SK-N-SH (cell line): ENCODE measurements at regions of chr14 and their contacts with region 1.

Region 1: DNA sequence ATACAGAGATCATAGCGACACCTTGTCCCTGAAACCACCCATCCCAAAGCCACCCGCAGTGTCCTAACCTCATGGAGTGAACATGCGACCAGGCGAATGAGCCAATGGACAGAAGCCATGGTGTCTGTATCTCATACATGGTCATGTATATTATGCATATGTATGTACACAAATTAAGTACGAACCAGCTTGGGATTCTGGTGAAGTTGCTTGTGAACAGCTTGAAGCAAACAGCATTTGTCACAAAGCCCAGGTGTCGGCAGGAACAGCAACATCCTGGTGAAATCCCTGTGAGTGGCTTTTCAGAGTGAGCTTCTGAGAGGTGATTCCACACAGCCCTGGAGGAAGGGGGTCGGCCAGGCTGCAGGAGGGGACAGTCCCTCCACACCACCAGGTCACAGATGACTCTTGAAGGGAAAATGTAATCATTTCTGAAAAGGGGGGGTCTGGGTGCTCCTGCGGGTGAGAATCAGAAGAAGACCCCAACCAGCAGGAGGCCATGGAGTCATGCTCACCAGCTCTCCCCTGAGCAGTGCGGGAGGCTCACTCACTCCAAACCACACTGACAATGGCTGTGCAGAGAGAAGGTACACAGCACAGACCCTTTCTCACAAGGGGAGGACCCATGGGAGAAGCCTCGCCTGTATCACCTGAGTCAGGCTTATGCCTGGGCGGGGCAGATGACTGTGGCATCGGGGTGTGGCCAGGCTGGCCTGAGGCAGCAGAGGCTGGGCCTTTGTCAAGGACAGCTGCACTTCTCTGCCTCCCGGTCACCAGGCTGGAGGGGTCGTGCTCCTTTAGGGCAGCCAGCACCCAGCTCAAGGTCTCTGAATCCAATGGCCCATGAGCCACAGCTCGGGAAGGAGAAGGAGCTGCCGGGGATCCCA is 14.3 kb downstream of the CHGA start:
- DNase-seq: no peak
- H3K4me3 ChIP-seq: no peak overlapping the region
- H3K27ac ChIP-seq: peak overlapping the region in 1 of 2 experiments; percentile 60; a peak in 2 of 4 replicates
- H3K4me1 ChIP-seq: peaks cover 0 to 41% of the 10 kb centered on the region in 2 experiments; a peak in 1 of 4 replicates
- H3K27me3 ChIP-seq: no peaks in the 10 kb centered on the region
- CTCF ChIP-seq: no peak
- EP300 ChIP-seq: no peak
- RAD21 ChIP-seq: no peak

Region 2: DNA sequence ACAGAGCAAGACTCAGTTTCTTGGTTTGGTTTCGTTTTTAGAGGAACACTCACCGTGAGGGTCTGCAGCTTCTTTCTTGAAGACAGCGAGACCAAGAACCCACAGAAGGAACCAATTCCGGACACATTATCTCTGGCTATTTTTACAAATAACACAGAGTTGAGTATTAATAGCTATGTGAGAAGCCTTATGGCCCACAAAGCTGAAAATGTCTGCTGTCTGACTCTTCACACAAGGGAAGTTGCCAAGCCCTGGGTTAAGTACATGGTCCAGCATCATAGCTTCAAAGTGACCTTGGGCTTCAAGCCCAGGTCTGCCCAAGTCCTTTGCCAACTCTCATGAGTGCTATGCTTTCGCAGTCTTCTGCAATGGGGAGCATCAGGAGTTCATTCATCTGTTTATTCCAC is 186.3 kb before region 1 on chr14:
- CTCF ChIA-PET with region 1: no interaction called
- POLR2A ChIA-PET with region 1: no interaction called
- DNase-seq: no peak
- H3K4me3 ChIP-seq: no peak overlapping the region
- H3K27ac ChIP-seq: no peak overlapping the region
- H3K4me1 ChIP-seq: peaks cover 0 to 6% of the 10 kb centered on the region in 2 experiments; a peak in 1 of 4 replicates
- H3K27me3 ChIP-seq: no peaks in the 10 kb centered on the region
- CTCF ChIP-seq: no peak
- EP300 ChIP-seq: no peak
- RAD21 ChIP-seq: no peak

Region 3: DNA sequence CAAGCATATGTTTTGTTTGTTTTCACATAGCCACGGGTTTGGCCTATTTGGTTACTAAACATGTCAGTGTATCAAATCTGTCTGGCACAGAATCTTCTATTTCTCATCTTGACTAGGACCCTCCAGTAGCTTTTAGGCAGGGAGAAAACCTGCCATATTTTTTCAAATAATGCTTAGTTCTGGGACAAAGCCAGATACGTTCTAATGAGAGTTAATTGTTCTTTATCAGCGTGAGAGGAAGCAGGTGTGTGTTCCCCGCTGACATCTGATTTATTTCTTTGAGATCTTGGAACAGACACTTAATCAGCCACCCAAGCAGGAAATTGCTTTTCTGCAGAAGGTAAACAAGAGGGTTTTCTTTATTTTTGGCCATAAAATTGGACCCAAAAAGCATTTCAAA is 88.4 kb before region 1 on chr14:
- CTCF ChIA-PET with region 1: no interaction called
- POLR2A ChIA-PET with region 1: interaction called, 11 read pairs
- DNase-seq: peak; percentile 25
- H3K4me3 ChIP-seq: no peak overlapping the region
- H3K27ac ChIP-seq: peak overlapping the region in 1 of 2 experiments; percentile 59; a peak in 2 of 4 replicates
- H3K4me1 ChIP-seq: no peaks in the 10 kb centered on the region; a peak in 2 of 4 replicates
- H3K27me3 ChIP-seq: no peaks in the 10 kb centered on the region
- CTCF ChIP-seq: no peak
- EP300 ChIP-seq: peak in 1 of 2 experiments; percentile 80; a peak in 2 of 4 replicates
- RAD21 ChIP-seq: no peak